ENCODE measurements at regions of chr19 and their contacts with region 1.

Region 1: DNA sequence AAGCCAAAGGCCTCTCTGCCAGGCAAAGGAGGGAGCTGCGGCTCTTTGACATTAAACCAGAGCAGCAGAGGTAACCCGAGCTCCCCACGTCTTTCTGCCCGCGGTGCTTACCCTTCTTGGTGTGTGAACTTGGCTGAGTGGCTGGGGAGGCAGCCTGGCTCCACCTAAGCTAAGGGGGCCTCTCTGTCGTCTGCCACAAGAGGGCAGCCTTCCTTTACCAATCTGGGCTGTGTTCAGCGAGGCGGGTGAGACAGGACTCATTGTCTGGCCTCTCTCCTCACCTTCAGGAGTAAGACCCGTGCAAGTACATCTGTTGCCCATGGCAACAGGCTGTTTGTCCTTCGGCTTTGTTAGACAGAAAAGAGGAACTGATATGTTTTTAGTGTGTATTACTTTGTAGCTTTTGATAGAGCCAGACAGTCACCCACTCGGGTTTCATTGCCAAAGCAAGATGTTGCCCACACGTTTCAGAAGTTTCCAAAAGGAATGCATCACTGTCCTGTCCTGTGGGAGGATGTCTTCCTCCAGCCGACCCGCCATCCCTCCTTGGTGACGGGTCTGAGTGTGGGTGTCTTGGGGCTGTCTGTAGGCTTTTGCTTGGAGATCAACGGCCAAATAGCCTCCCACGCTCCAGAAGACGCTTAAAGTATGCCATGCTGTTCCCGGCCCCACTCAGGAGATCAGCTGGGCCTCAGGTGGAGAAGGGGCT is 4.6 kb downstream of the POP4 start:
- DNase-seq: peak; percentile 86
- H3K4me3 Mint-ChIP-seq: no peak overlapping the region
- H3K27ac Mint-ChIP-seq: no peak overlapping the region
- H3K4me1 Mint-ChIP-seq: no peaks in the 10 kb centered on the region
- H3K27me3 Mint-ChIP-seq: no peaks in the 10 kb centered on the region
- CTCF ChIP-seq: peak; percentile 74

Region 2: DNA sequence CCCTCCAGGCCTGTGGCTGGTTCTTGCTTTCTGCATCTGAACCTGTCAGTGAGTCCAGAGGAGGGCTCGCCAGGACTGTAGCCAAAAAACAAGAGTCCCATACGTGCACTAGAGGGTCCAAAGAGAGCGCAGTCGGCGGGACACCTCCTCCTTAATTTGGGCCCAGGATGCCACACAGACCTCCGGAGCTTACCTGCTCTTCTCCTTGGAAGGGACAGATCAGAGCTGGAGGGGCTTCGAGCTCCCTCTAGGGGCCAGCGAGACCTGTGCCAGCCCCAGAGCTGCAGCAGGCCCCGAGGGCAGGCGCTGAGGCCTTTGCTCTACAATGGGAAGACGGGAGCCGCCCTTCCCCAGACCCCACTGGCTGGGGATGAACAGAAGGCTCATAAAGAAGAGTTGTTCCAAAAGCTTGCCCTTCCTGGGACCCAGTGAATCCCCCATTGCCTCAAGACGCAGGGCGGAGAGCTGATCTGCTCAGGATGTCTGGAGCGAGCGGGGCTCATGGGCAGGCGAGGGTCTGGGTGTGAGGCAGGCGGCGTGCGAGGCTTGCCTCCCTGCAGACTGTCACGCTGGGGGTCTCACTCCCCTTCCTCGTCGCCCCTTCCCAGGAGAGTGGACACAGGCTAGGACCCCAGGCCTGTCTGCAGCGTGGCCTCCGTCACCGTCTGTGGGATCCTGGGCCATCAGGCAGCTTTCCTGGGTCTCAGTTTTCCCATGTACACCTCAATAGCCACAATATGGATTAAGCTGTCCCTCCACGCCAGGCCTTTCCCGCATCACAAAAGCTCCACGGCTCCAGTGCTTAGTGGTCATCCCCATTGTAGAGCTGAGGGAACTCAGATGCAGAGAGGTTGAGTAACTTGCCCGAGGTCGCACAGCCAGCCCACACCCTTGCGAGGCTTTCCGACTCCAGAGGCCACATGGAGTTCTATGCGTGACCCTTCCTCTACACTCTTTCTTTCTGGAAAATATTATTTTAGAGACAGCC is 131.8 kb before region 1 on chr19:
- CTCF ChIA-PET with region 1: no interaction called
- POLR2A ChIA-PET with region 1: no interaction called
- intact Hi-C with region 1: no loop called
- DNase-seq: no peak
- H3K4me3 Mint-ChIP-seq: no peak overlapping the region
- H3K27ac Mint-ChIP-seq: no peak overlapping the region
- H3K4me1 Mint-ChIP-seq: no peaks in the 10 kb centered on the region
- H3K27me3 Mint-ChIP-seq: no peaks in the 10 kb centered on the region
- CTCF ChIP-seq: no peak

Region 3: GRCh38 chr19:29622138-29623070 is 11.7 kb after region 1 on chr19:
- CTCF ChIA-PET with region 1: interaction called, 104 read pairs
- POLR2A ChIA-PET with region 1: interaction called, 5 read pairs
- intact Hi-C with region 1: no loop called
- DNase-seq: no peak
- H3K4me3 Mint-ChIP-seq: no peak overlapping the region
- H3K27ac Mint-ChIP-seq: no peak overlapping the region
- H3K4me1 Mint-ChIP-seq: no peaks in the 10 kb centered on the region
- H3K27me3 Mint-ChIP-seq: peaks cover 21% of the 10 kb centered on the region
- CTCF ChIP-seq: no peak

Region 4: DNA sequence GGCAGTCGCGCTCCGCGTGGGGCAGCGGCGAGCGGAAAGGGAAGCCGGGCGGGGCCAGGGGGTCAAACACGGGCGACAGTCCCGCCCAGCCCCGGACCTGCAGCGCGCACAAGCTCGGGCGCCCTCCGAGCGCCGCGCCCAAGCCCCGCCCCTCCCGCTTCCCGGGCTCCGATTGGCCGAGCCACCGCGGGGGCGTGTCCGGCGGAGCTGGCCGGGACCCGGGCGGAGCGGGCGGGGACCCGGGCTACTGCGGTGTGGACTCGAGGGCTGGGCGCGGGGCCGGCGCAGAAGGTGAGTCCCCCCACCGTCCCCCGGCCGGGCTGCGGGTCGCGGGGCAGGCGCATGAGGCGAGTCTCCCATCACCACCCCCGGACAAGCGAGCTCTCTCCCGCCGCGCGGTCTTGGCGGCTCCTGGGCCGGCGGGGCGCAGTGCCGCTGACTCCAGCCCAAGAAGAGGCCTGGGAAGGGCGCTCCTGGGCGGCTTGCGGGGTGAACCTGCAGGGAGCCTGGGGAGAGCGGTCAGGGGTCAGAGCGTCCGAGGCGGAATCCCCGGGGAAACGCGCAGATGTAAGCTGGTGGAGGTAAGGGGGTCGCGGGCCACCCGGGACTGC is 54.6 kb after region 1 on chr19 and contains the start of gene PLEKHF1:
- CTCF ChIA-PET with region 1: interaction called, 28 read pairs
- POLR2A ChIA-PET with region 1: interaction called, 13 read pairs
- intact Hi-C with region 1: loop called (anchors 2 kb)
- DNase-seq: peak; percentile 82
- H3K4me3 Mint-ChIP-seq: peak within 1 kb of the TSS; percentile 76
- H3K27ac Mint-ChIP-seq: no peak within 1 kb of the TSS
- H3K4me1 Mint-ChIP-seq: peaks cover 16% of the 10 kb centered on the region
- H3K27me3 Mint-ChIP-seq: no peaks in the 10 kb centered on the region
- CTCF ChIP-seq: no peak
- total RNA-seq, gene PLEKHF1: 2.9 and 9.6 TPM in 2 replicates

Region 5: DNA sequence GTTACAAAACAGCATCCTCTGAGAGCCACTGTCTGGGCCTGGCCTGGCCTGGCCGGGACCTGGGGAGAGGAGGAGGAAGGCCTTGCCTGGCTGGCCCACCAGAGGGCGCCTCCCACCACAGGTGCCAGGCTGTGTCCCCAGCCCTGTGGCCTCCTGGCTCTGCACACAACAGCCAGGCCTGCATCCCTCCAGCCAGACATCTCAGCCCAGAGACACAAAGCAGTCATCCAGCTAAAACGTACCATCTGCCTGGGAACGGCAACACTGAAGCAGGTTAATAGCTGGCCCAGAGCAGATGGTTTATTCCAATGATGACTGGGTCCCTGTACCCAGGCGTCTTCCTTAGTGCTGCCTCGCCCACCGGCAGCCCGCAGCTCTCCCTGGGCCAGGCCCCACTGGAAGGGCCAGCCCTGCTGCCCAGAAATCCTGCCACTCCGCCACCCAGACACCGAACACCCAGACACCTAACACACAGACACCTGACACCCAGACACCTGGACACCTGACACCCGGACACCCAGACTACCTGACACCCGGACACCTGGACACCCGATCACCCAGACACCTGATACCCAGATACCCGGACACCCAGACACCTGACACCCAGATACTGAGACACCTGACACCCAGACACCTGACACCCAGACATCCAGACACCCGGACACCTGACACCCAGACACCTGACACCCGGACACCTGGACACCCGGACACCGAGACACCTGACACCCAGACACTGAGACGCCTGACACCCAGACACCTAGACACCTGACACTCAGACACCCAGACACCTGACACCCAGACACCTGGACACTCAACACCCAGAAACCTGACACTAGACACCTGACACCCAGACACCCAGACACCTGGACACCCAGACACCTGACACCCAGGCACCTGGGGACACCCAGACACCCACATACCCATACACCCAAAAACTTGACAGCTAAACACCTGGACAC is 84.2 kb after region 1 on chr19:
- CTCF ChIA-PET with region 1: interaction called, 11 read pairs
- POLR2A ChIA-PET with region 1: interaction called, 3 read pairs
- intact Hi-C with region 1: loop called (anchors 1 kb)
- DNase-seq: peak; percentile 70
- H3K4me3 Mint-ChIP-seq: no peak overlapping the region
- H3K27ac Mint-ChIP-seq: no peak overlapping the region
- H3K4me1 Mint-ChIP-seq: no peaks in the 10 kb centered on the region
- H3K27me3 Mint-ChIP-seq: no peaks in the 10 kb centered on the region
- CTCF ChIP-seq: peak; percentile 66

Region 6: GRCh38 chr19:29724102-29724641 is 113.5 kb after region 1 on chr19:
- CTCF ChIA-PET with region 1: interaction called, 398 read pairs
- POLR2A ChIA-PET with region 1: no interaction called
- intact Hi-C with region 1: no loop called
- DNase-seq: no peak
- H3K4me3 Mint-ChIP-seq: no peak overlapping the region
- H3K27ac Mint-ChIP-seq: no peak overlapping the region
- H3K4me1 Mint-ChIP-seq: no peaks in the 10 kb centered on the region
- H3K27me3 Mint-ChIP-seq: no peaks in the 10 kb centered on the region
- CTCF ChIP-seq: no peak

Measured in MCF 10A (cell line).